ENCODE measurements at regions of chr16 and their contacts with region 1.

Region 1: GRCh38 chr16:4957720-4958509 is at the start of gene SEC14L5:
- DNase-seq: peak; percentile 93 to 100 (median 98)

Region 2: DNA sequence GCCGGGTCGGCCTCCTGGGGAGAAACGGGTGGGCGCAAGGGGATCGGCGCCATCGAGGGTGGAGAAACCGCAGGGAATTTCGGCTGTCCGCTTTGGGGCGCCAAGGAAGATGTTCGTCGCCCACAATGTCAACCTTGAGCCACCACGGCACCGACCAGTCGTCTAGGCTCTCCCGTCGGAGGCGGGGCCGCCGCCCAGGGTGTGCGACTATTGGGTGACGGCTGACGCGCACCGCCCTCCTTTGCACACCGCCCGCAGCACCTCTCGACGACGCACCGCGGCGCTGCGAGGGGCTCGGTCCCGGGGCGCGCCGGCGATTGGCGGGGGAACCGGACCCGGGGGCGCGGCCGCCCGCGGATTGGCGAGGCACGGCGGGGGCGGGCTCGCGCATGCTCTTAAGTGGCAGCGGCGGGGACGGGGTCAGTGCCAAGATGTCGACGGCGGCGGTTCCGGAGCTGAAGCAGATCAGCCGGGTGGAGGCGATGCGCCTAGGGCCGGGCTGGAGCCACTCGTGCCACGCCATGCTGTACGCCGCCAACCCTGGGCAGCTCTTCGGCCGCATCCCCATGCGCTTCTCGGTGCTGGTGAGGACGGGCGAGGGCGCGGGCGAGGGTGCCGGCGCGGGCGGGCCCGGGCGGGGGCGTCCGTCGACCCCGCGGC is 264.5 kb before region 1 on chr16 and contains the start of gene NUDT16L1:
- intact Hi-C with region 1: loop called (anchors 5 kb)
- DNase-seq: peak; percentile 89 to 100 (median 96)

Region 3: DNA sequence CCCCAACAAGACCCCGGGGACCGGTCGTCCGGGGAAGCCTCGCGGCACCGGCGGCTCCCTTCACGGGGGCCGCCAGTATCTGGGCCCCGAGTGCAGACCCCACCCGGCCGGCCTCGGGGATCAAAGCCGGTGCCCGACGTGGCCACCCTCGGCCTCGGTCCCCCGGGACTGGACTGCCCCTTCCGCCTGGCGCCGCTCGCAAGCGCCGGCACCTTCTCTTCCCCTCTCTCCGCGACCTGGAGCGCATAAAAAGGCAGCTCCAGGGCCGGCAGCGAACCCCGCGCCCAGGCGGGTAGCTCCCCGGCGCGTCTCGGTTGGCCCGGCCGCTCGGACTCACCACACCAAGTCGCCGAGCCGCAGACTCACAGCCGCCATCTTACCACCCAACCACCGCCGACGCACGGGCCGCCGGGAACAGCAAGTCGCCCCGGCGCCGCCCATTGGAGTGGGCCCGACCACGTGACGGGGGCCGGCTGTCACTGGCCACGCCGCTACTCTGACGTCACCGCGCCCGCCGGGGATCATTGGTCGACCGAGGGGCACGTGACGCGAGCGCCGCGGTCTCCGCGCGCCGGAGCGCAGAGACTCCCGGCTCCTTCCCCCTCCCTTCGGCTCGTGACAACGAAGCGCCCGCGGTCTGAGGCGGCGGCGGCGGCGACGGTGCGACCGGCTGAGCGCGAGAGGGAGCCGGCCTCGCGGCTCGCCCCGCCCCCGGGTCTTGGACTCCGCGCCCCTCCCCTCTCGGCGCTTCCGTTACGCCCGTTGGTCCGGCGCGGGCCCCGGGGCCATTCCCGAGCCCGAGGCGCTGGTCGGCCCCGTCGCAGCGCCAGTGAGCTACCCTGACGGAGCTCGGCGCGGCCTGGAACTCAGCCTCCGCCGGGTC is 110.8 kb before region 1 on chr16 and contains the starts of genes GLYR1 and UBN1:
- intact Hi-C with region 1: loop called (anchors 5 kb)
- DNase-seq: peak; percentile 98 to 100 (median 98)

Region 4: GRCh38 chr16:4994719-4995434 is 37.0 kb after region 1 on chr16:
- intact Hi-C with region 1: loop called (anchors 1 kb)
- DNase-seq: peak; percentile 61 to 97 (median 78)

Region 5: GRCh38 chr16:5025171-5025632 is 67.3 kb after region 1 on chr16:
- intact Hi-C with region 1: loop called (anchors 5 kb)
- DNase-seq: peak; percentile 71 to 97 (median 82)

Region 6: DNA sequence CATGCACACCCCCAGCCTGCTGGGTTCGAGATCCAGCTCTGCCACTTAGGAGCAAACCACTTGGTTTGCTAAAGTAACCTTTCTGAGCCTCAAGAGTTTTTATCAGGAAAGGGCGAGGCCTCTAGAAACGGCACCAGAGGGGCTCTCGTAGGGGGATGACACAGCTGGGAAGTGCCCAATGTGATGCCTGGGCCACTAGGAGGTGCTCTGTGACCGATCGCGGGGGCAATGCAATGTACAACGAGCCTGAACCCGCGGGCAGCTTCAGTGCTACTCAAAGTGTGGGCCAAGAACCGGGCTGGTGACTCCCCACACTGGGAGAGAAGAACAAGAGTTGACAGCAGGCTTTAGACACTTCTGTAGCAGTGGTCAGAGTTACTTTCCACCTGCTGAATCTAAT is 98.4 kb after region 1 on chr16:
- intact Hi-C with region 1: no loop called
- DNase-seq: peak in 3 of 10 donors; percentile 20 to 80 (median 54)

Region 7: GRCh38 chr16:5234295-5235050 is 276.6 kb after region 1 on chr16:
- intact Hi-C with region 1: no loop called
- DNase-seq: peak in 1 of 10 donors; percentile 22